Heart left ventricle (tissue), 16 donors: ENCODE measurements at regions of chr6 and their contacts with region 1.

Region 1: DNA sequence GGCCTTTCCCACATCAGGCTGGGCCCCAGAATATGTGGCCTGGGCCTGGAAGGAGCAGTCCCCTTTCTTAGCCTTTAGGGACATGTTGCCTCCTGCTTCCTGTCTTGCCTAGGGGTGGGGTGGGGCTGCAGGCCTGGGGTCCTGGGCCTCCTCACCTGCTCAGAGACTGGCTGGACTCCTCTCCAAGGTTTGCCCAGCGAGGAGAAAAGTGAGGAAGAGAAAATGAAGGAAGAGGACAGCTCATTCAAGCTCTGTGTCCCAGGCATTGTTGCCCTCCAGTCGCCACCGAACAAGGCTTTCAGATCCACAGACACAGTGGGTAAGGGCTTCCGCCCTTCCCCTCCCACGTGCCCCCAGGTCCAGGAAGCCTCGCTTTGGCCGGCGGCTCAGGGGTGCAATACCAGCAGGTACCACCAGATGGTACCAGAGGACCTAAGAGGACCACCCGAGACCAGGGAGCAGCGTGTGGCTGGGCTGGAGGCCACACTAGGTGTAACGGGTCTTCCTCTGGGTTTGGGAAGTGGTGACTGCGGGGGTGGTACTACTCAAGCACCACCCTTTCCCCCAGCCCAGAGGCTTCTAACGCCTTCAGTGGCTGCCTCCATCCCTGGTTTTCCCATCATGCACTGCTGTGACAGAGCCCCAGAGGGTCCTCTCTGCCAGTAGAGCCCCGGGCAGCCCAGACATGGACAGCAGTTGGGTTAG is 5.5 kb upstream of the BAK1 start:
- DNase-seq: peak; percentile 80 to 91 (median 84)
- ATAC-seq: peak; percentile 30 to 67 (median 64)
- H3K4me3 ChIP-seq: peak overlapping the region in 5 of 12 donors; percentile 13 to 29 (median 23)
- H3K27ac ChIP-seq: peak overlapping the region in 9 of 12 donors; percentile 18 to 43 (median 24)
- H3K4me1 ChIP-seq: peaks cover 2 to 38% (median 29%) of the 10 kb centered on the region in 12 donors
- H3K27me3 ChIP-seq: no peaks in the 10 kb centered on the region
- CTCF ChIP-seq: peak; percentile 95 to 100 (median 99)
- POLR2A ChIP-seq: no peak

Region 2: DNA sequence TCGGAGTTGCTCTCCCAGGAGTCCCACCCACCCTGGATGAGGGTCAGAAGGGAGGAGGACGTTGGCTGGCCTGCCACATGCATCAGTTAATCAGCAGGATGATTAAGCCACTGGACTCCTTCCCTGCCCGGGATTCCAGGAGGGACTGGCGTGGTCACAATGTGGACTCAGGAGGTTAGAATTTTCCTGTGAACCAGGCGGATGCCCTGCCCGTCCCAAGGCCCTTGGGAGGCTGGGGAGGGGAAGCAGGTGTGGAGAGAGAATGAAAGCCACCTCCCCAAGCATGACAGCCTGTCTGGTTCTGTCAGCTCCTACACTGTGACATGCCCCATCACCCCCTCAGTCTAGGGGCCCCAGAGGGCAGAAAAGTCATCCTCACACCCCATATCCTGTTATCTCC is 24.0 kb after region 1 on chr6:
- intact Hi-C with region 1: loop called in 1 of 10 experiments (anchors 1 kb)
- DNase-seq: peak in 4 of 5 donors; percentile 59 to 85 (median 70)
- ATAC-seq: peak; percentile 33 to 80 (median 76)
- H3K4me3 ChIP-seq: no peak overlapping the region
- H3K27ac ChIP-seq: peak overlapping the region; percentile 54 to 89 (median 78)
- H3K4me1 ChIP-seq: peaks cover 5 to 38% (median 27%) of the 10 kb centered on the region in 12 donors
- H3K27me3 ChIP-seq: no peaks in the 10 kb centered on the region
- CTCF ChIP-seq: no peak
- POLR2A ChIP-seq: no peak

Region 3: DNA sequence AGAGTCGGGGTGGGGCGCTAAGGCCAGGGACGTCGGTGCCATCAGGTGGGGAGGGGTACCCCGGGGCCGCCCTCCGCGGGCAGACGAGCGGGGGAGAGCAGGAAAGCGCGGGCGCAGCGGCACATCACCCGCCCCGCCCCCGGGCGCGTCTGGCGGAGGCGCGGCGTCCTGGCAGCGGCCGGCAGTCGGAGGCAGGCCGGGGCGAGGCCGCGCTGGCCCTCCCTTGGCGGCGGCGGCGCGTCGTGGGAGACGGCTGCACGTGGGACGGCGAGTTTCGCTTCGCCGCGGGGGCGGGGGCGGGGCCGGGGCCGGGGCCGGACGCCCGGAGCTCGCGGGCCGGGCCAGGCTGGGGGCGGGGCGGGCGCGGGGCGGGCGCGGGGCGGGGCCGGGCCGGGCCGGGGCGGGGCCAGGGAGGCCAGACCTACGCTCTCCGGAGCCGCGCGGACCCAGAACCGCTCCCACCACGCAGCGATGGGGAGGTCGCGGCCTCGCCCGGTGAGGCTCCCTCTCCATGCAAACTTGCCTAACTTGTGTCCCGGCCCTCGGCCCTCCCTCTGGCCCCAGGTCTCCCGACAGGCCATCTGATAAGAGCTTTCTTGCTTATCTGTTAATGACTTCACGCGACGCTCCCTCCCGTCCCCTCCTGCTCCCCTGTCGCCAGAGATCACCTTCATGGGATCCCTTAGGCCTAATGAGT is 48.1 kb after region 1 on chr6:
- intact Hi-C with region 1: loop called in 8 of 10 experiments (anchors 1 to 10 kb)
- DNase-seq: peak; percentile 72 to 84 (median 79)
- ATAC-seq: peak; percentile 71 to 87 (median 86)
- H3K4me3 ChIP-seq: peak overlapping the region in 11 of 12 donors; percentile 23 to 58 (median 47)
- H3K27ac ChIP-seq: peak overlapping the region in 10 of 12 donors; percentile 0 to 72 (median 42)
- H3K4me1 ChIP-seq: peaks cover 0 to 32% (median 22%) of the 10 kb centered on the region in 12 donors
- H3K27me3 ChIP-seq: peaks cover 0 to 6% (median 0%) of the 10 kb centered on the region in 9 donors
- CTCF ChIP-seq: no peak
- POLR2A ChIP-seq: no peak

Region 4: GRCh38 chr6:33700391-33701050 is 115.0 kb after region 1 on chr6:
- intact Hi-C with region 1: loop called (anchors 1 to 5 kb)
- DNase-seq: peak; percentile 50 to 77 (median 75)
- ATAC-seq: peak; percentile 27 to 58 (median 48)
- H3K4me3 ChIP-seq: no peak overlapping the region
- H3K27ac ChIP-seq: peak overlapping the region in 4 of 12 donors; percentile 19 to 41 (median 38)
- H3K4me1 ChIP-seq: peaks cover 6 to 57% (median 39%) of the 10 kb centered on the region in 12 donors
- H3K27me3 ChIP-seq: no peaks in the 10 kb centered on the region
- CTCF ChIP-seq: peak; percentile 55 to 76 (median 66)
- POLR2A ChIP-seq: no peak

Region 5: DNA sequence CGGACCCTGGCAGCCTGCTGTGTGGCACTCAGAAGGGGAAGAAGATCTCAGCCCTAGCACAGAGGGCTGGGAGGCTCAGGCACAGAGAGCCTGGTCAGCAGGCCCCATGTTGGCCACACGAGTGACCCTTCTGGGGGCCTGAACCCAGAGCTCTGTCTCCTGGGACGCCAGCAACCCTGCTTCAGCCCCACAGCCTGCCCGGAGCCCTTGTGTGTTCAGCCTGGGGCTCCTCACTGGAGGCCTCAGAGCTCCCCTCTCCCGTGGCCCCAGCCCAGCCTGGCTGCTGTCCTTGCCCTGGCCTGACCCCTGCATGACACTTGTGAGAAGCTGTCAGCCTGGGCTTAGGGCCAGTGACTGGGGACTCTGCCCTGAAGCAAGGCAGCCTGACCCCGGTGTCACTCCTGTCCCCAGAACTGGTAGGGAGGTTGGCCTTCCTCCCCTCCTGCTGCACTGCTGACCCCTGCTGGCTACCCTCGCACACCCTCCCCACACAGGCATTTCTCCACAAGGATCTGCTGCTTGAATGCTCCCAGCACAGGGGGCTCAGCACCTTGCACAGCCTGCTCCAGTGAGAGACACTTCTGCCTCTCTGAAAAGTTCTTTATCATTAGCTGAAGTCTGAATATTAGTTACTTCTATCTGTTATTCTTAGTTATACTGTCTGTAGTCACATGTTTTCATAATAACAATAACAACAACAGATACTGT is 176.5 kb after region 1 on chr6:
- intact Hi-C with region 1: loop called in 9 of 10 experiments (anchors 2 to 10 kb)
- DNase-seq: peak; percentile 79 to 94 (median 88)
- ATAC-seq: peak; percentile 83 to 95 (median 90)
- H3K4me3 ChIP-seq: no peak overlapping the region
- H3K27ac ChIP-seq: peak overlapping the region in 10 of 12 donors; percentile 51 to 86 (median 74)
- H3K4me1 ChIP-seq: peaks cover 0 to 26% (median 15%) of the 10 kb centered on the region in 12 donors
- H3K27me3 ChIP-seq: no peaks in the 10 kb centered on the region
- CTCF ChIP-seq: peak; percentile 56 to 81 (median 68)
- POLR2A ChIP-seq: no peak

Region 6: GRCh38 chr6:34154668-34155447 is 569.3 kb after region 1 on chr6:
- intact Hi-C with region 1: loop called in 6 of 10 experiments (anchors 5 to 10 kb)
- DNase-seq: peak in 4 of 5 donors; percentile 31 to 79 (median 48)
- ATAC-seq: peak; percentile 22 to 86 (median 75)
- H3K4me3 ChIP-seq: peak overlapping the region in 6 of 12 donors; percentile 5 to 30 (median 20)
- H3K27ac ChIP-seq: no peak overlapping the region
- H3K4me1 ChIP-seq: peaks cover 0 to 11% (median 5%) of the 10 kb centered on the region in 12 donors
- H3K27me3 ChIP-seq: peaks cover 12 to 62% (median 55%) of the 10 kb centered on the region in 9 donors
- CTCF ChIP-seq: peak; percentile 92 to 98 (median 96)
- POLR2A ChIP-seq: no peak